Psoas muscle (tissue), 8 donors: ENCODE measurements at regions of chr10 and their contacts with region 1.

Region 1: GRCh38 chr10:80205478-80206276 is at the start of gene ANXA11:
- DNase-seq: peak; percentile 87 to 91
- ATAC-seq: peak; percentile 62 to 76 (median 72)
- H3K4me3 ChIP-seq: peak within 1 kb of the TSS; percentile 96
- H3K27ac ChIP-seq: peak within 1 kb of the TSS; percentile 99
- H3K4me1 ChIP-seq: peaks cover 44% of the 10 kb centered on the region
- H3K27me3 ChIP-seq: no peaks in the 10 kb centered on the region
- CTCF ChIP-seq: no peak
- total RNA-seq, gene ANXA11: 120 to 389 (median 273) TPM

Region 2: DNA sequence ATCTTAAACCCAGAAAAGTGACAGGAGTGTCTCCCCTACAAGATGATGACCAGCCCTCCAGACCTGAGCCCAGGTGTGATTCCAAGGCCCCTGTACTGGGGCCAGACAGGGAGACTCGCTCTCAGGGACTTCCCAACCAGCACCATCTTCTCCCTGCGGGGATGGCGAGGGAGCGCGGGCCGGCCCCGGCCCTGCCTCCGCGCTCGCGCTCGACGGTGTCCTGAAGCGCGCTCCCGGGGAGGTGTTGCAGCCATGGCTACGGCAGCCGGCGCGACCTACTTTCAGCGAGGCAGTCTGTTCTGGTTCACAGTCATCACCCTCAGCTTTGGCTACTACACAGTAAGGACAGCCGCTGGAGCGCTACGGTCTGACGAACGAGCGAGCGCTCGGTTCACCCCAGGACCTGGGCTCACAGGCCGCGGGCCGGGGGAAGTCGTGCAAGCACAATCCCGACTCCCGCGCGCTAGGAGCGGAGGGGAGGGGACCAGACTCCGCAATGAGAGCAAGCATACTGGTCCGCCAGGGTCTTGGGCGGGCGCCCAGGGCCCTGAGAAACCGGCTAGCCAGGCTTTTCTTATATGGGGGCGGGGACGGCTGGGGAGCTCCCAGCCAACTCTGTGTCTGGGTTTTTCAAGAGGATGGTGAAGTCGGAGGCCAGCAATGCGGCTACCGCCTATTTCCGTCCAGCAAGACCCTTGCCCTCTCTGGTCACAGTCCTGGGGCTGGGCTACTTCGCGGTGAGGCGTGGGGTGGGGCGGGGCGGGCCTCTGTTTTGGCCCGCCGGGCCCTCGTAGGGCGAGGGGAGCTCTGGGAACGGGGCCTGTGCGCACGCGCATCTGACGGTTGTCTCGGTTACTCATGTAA is 127.0 kb before region 1 on chr10 and contains the start of gene TMEM254:
- intact Hi-C with region 1: loop called in 1 of 2 experiments (anchors 10 kb)
- DNase-seq: peak; percentile 96 to 97
- ATAC-seq: peak; percentile 95 to 97 (median 96)
- H3K4me3 ChIP-seq: peak within 1 kb of the TSS; percentile 74
- H3K27ac ChIP-seq: peak within 1 kb of the TSS; percentile 96
- H3K4me1 ChIP-seq: peaks cover 10% of the 10 kb centered on the region
- H3K27me3 ChIP-seq: no peaks in the 10 kb centered on the region
- CTCF ChIP-seq: no peak
- total RNA-seq, gene TMEM254: 2.1 to 4.8 (median 3.1) TPM

Region 3: GRCh38 chr10:80161331-80162083 is 44.2 kb before region 1 on chr10:
- intact Hi-C with region 1: loop called (anchors 1 to 5 kb)
- DNase-seq: no peak
- ATAC-seq: no peak
- H3K4me3 ChIP-seq: no peak overlapping the region
- H3K27ac ChIP-seq: peak overlapping the region; percentile 95
- H3K4me1 ChIP-seq: peaks cover 57% of the 10 kb centered on the region
- H3K27me3 ChIP-seq: no peaks in the 10 kb centered on the region
- CTCF ChIP-seq: peak; percentile 5